Panc1 (cell line): ENCODE measurements at regions of chr7 and their contacts with region 1.

Region 1: DNA sequence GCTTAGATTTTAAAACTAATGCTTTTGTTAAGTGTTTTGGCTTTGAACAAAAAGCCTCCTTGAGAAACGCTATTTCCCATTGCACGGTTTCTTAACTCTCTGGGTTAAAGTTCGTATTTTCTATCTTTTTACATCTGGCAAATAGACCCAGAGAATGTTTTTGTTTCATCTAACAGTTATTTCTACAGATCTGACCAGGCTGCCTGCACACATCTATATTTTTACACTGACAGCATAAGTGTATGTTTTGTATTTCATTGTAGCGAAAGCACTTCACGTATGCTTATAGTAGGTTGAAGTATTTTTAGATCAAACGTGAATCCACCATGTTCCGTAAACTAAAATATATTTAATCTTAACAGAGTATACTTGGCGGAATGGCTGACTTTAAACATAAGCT is 477.3 kb downstream of the SDK1 start:
- DNase-seq: no peak
- ATAC-seq: no peak
- H3K4me3 ChIP-seq: no peak overlapping the region
- H3K27ac ChIP-seq: no peak overlapping the region
- H3K4me1 ChIP-seq: peaks cover 2% of the 10 kb centered on the region; the same call in 1 of the 2 replicates
- H3K27me3 ChIP-seq: no peaks in the 10 kb centered on the region
- CTCF ChIP-seq: no peak

Region 2: GRCh38 chr7:2956526-2957368 is 821.6 kb before region 1 on chr7:
- CTCF ChIA-PET with region 1: interaction called, 11 read pairs
- POLR2A ChIA-PET with region 1: no interaction called
- in situ Hi-C with region 1: no loop called
- intact Hi-C with region 1: no loop called
- DNase-seq: no peak
- ATAC-seq: peak; percentile 67; the same call in 1 of the 2 replicates
- H3K4me3 ChIP-seq: no peak overlapping the region
- H3K27ac ChIP-seq: no peak overlapping the region
- H3K4me1 ChIP-seq: no peaks in the 10 kb centered on the region
- H3K27me3 ChIP-seq: no peaks in the 10 kb centered on the region
- CTCF ChIP-seq: no peak

Region 3: DNA sequence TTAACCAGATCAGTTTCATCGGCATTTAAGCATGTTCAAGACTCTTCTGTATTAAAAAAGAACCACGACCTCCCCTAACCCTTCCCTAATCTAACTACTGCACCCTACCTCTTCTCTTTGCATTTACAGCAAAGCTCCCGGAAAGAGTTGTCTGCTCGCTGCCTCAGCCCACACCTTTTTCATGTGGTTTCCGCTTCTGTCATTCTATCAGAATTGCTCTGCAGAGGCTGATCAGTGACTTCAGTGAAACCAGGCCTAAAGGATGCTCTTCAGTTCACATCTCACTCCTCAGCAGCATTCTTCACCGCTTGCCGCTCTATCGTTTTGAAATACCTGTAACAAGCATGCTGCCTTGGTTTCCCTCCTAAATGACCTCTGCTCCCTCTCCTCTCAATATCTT is 316.4 kb before region 1 on chr7:
- CTCF ChIA-PET with region 1: no interaction called
- POLR2A ChIA-PET with region 1: no interaction called
- in situ Hi-C with region 1: no loop called
- intact Hi-C with region 1: no loop called
- DNase-seq: no peak
- ATAC-seq: no peak
- H3K4me3 ChIP-seq: no peak overlapping the region
- H3K27ac ChIP-seq: no peak overlapping the region
- H3K4me1 ChIP-seq: peaks cover 14% of the 10 kb centered on the region
- H3K27me3 ChIP-seq: no peaks in the 10 kb centered on the region
- CTCF ChIP-seq: no peak